ENCODE measurements at regions of chr15 and their contacts with region 1.

Region 1: DNA sequence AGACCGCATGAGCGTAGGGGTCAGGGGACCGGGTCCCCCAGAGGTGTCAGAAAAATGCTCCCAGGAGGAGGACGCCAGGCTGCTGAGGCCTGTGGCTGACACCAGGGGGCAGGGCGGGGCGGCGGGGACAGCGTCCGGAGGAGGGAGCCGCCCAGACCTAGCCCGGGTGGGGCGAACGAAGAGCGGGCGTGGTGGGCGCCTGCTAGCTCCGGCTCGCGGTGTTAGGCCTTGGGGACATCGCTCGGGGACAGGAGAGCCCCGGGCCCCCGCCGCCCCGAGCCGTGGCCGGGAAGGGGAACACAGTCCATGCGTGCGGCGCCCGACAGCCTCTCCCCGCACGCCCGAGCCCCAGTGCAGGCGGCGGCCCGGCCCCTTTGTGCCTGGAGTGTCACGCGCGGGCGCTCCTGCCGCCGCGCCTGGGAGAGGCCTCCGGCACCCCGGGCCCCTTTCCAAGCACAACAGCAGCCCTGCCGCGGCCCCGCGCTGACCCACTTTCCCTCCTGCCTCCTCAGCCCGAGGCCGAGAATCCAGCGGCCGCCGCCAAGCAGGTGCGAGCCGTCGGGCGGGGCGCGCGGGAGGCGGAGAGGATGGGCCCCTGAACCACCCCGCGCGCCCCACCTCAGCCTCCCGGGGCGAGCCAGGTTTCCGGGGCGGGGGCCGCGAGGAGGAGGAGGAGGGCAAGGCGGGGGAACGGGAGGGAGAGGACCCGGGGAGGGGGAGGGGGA is 111.0 kb upstream of the KLF13 start:
- DNase-seq: peak; percentile 87
- H3K4me3 Mint-ChIP-seq: peak overlapping the region; percentile 69
- H3K27ac Mint-ChIP-seq: peak overlapping the region; percentile 94
- H3K4me1 Mint-ChIP-seq: peaks cover 65% of the 10 kb centered on the region
- H3K27me3 Mint-ChIP-seq: peaks cover 10% of the 10 kb centered on the region

Region 2: GRCh38 chr15:31200735-31201151 is 14.9 kb before region 1 on chr15:
- CTCF ChIA-PET with region 1: interaction called, 18 read pairs
- DNase-seq: peak; percentile 88
- H3K4me3 Mint-ChIP-seq: no peak overlapping the region
- H3K27ac Mint-ChIP-seq: peak overlapping the region; percentile 19
- H3K4me1 Mint-ChIP-seq: peaks cover 51% of the 10 kb centered on the region
- H3K27me3 Mint-ChIP-seq: peaks cover 61% of the 10 kb centered on the region

Region 3: DNA sequence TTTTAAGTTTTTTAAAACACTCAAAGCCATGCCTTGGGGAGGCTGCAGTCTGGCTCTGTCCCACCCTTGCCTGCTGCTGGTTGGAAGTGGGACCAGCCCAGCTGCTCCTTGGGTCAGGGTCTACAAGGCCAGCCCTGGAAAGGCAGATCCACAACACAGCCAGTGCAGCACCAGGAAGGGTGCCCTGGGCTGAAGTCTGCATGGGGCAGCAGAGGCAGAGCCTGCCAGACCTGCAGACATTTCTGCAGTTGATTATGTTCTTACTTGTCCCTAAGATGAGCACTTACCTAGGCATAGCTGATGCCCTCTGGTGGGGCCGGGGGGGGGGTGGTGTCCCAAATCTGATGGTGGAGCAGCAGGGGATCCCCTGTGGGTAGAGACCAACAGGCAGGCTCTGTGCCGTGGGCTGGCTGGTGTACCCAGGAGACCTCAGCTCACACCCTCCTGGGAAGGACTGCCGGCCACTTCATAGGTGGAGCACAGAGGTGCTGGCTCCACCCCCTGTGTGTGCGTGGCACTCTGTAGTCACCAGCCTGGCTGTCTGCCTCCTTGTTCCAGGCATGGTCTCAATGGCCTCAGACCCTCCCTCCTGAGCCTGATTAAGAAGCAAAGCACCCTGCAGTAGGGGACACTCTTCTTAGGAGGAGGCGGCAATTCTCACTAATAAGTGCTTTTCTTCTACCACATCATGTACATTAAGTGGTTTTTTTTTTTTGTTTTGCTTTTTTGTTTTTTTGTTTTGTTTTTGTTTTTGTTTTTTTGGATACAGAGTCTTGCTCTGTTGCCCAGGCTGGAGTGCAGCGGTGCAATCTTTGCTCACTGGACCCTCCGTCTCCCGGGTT is 13.6 kb after region 1 on chr15:
- CTCF ChIA-PET with region 1: no interaction called
- DNase-seq: no peak
- H3K4me3 Mint-ChIP-seq: no peak overlapping the region
- H3K27ac Mint-ChIP-seq: no peak overlapping the region
- H3K4me1 Mint-ChIP-seq: peaks cover 12% of the 10 kb centered on the region
- H3K27me3 Mint-ChIP-seq: peaks cover 33% of the 10 kb centered on the region

Region 4: GRCh38 chr15:31263751-31264558 is 48.3 kb after region 1 on chr15:
- CTCF ChIA-PET with region 1: interaction called, 17 read pairs
- DNase-seq: peak; percentile 81
- H3K4me3 Mint-ChIP-seq: peak overlapping the region; percentile 32
- H3K27ac Mint-ChIP-seq: peak overlapping the region; percentile 96
- H3K4me1 Mint-ChIP-seq: peaks cover 88% of the 10 kb centered on the region
- H3K27me3 Mint-ChIP-seq: peaks cover 29% of the 10 kb centered on the region

Region 5: GRCh38 chr15:31344823-31345605 is 129.4 kb after region 1 on chr15:
- CTCF ChIA-PET with region 1: interaction called, 11 read pairs
- DNase-seq: no peak
- H3K4me3 Mint-ChIP-seq: peak overlapping the region; percentile 85
- H3K27ac Mint-ChIP-seq: peak overlapping the region; percentile 99
- H3K4me1 Mint-ChIP-seq: peaks cover 100% of the 10 kb centered on the region
- H3K27me3 Mint-ChIP-seq: no peaks in the 10 kb centered on the region

Measured in activated naive CD4-positive, alpha-beta T cell treated with anti-CD3 and anti-CD28 coated beads, Interleukin-2, amount 10 ng/mL, durations not matched to agents 7 days and 5 days (primary cell).